ENCODE measurements at regions of chr15 and their contacts with region 1.

Region 1: GRCh38 chr15:91942676-91943576 is 89.4 kb downstream of the SLCO3A1 start:
- DNase-seq: peak; percentile 71
- H3K4me3 Mint-ChIP-seq: no peak overlapping the region
- H3K27ac Mint-ChIP-seq: no peak overlapping the region
- H3K4me1 Mint-ChIP-seq: peaks cover 35% of the 10 kb centered on the region
- H3K27me3 Mint-ChIP-seq: no peaks in the 10 kb centered on the region

Region 2: GRCh38 chr15:91852741-91853510 is 90.0 kb before region 1 on chr15:
- CTCF ChIA-PET with region 1: interaction called, 17 read pairs
- DNase-seq: peak; percentile 77
- H3K4me3 Mint-ChIP-seq: peak overlapping the region; percentile 88
- H3K27ac Mint-ChIP-seq: peak overlapping the region; percentile 89
- H3K4me1 Mint-ChIP-seq: peaks cover 70% of the 10 kb centered on the region
- H3K27me3 Mint-ChIP-seq: peaks cover 7% of the 10 kb centered on the region